ENCODE measurements at regions of chr7 and their contacts with region 1.

Region 1: DNA sequence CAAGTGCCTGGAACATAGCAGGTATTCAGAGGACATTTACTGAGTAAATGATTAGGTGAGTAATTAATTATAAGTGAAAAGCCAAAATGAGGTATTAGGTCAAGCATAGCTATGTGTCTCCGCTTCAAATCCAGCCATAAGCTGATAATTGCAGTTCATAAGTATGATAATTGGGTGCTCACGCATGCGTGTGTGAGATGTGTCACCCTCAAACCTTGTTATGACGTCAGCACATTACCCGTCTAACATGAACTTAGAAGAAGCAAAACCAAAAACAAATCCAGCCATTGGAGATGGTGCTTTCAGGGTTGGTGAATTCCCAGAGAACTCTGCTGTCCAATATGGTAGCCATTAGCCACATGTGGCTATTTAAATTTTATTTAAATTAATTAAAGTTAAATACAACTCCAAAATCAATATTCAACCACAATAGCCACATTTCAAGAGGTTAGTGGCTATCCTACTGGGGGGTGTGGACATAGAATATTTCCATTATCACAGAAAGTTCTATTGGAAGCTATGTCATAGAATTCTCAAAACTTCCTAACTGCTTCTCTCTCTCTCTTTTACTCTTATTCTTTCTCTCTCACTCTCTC is at the start of gene CPA5:
- DNase-seq: no peak
- ATAC-seq: no peak
- H3K4me3 ChIP-seq: no peak within 1 kb of the TSS
- H3K27ac ChIP-seq: no peak within 1 kb of the TSS
- H3K4me1 ChIP-seq: no peaks in the 10 kb centered on the region
- H3K27me3 ChIP-seq: no peaks in the 10 kb centered on the region
- total RNA-seq, gene CPA5: not detected

Region 2: GRCh38 chr7:130708001-130708400 is 363.6 kb after region 1 on chr7:
- intact Hi-C with region 1: loop called in 1 of 4 experiments (anchors 5 kb)
- DNase-seq: no peak
- ATAC-seq: no peak
- H3K4me3 ChIP-seq: no peak overlapping the region
- H3K27ac ChIP-seq: no peak overlapping the region
- H3K4me1 ChIP-seq: no peaks in the 10 kb centered on the region
- H3K27me3 ChIP-seq: no peaks in the 10 kb centered on the region

Region 3: GRCh38 chr7:130793855-130794618 is 449.7 kb after region 1 on chr7:
- intact Hi-C with region 1: no loop called
- DNase-seq: no peak
- ATAC-seq: no peak
- H3K4me3 ChIP-seq: no peak overlapping the region
- H3K27ac ChIP-seq: no peak overlapping the region
- H3K4me1 ChIP-seq: no peaks in the 10 kb centered on the region
- H3K27me3 ChIP-seq: no peaks in the 10 kb centered on the region